CD4-positive, alpha-beta T cell (primary cell): ENCODE measurements at regions of chr1 and their contacts with region 1.

Region 1: DNA sequence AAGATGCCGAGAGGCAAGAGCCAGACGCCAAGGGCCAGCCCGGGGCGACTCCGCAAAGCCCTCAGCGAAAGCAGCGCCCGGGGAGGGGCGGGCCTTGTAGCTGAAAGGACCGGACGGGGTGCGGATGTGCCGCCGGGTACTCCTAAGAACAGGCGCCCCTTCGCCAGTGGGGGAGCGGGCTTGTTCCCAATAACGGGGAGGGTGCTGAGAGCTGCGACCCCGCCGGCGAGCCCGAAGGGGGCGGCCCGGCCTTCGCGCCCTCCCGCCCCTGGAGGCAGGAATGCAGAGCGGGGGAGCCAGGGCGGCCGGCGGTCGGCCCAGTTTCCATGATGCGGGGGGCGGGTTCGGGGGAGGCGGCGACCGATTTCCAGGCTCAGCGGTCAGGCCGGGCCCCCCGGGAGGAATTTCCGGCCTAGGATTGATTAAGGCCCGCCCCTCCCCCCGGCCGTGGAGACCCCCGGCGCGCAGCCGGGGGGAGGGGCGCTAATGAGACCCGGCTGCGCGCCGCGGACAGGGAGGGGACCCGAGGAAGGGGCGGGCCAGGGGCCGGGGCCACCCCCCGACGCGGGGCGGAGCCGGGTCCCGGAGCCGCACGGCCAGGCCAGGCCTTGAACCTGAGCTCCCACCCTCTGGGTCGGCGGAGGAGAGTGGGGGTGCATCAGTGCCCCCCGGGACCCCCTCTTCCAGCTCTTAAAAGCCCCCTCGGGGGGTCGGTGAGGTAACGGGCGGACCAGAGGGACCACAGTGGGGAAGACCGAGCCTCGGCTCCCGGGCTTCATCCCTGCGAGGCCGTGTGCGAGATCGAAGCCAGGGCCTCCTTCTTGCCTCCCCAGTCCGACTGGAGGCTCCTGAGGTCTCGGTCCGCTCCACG is 898 bp upstream of the TMEM200B start:
- DNase-seq: peak; percentile 20 to 69 (median 42)
- ATAC-seq: peak; percentile 55
- H3K4me3 ChIP-seq: peak overlapping the region; percentile 61
- H3K4me3 Mint-ChIP-seq: peak overlapping the region; percentile 48
- H3K27ac ChIP-seq: no peak overlapping the region
- H3K27ac Mint-ChIP-seq: no peak overlapping the region
- H3K4me1 ChIP-seq: peaks cover 41% of the 10 kb centered on the region
- H3K4me1 Mint-ChIP-seq: peaks cover 8% of the 10 kb centered on the region
- H3K27me3 ChIP-seq: peaks cover 25 to 44% of the 10 kb centered on the region in 2 experiments
- H3K27me3 Mint-ChIP-seq: peaks cover 26% of the 10 kb centered on the region
- CTCF ChIP-seq: no peak

Region 2: GRCh38 chr1:27940297-27940696 is 1184.3 kb before region 1 on chr1:
- CTCF ChIA-PET with region 1: no interaction called
- POLR2A ChIA-PET with region 1: no interaction called
- intact Hi-C with region 1: no loop called
- DNase-seq: peak; percentile 63 to 90 (median 74)
- ATAC-seq: peak; percentile 90
- H3K4me3 ChIP-seq: no peak overlapping the region
- H3K4me3 Mint-ChIP-seq: no peak overlapping the region
- H3K27ac ChIP-seq: peak overlapping the region in 1 of 2 donors; percentile 20
- H3K27ac Mint-ChIP-seq: peak overlapping the region; percentile 38
- H3K4me1 ChIP-seq: peaks cover 45% of the 10 kb centered on the region
- H3K4me1 Mint-ChIP-seq: peaks cover 29% of the 10 kb centered on the region
- H3K27me3 ChIP-seq: peaks cover 0 to under 1% of the 10 kb centered on the region in 2 experiments
- H3K27me3 Mint-ChIP-seq: peaks cover 6% of the 10 kb centered on the region
- CTCF ChIP-seq: peak; percentile 79

Region 3: DNA sequence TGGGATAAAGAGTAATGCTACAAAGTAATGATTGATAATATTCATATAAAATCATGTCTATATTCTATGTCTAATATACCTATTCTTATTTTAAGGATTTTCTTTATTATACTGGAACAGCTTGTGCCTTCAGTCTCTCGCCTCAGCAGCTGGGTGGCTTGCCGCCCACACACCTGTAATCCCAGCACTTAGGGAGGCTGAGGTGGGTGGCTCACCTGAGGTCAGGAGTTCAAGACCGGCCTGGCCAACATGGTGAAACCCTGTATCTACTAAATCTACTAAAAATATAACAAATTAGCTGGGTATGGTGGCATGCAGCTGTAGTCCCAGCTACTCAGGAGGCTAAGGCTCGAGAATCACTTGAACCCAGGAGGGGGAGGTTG is 579.4 kb before region 1 on chr1:
- CTCF ChIA-PET with region 1: no interaction called
- POLR2A ChIA-PET with region 1: no interaction called
- intact Hi-C with region 1: no loop called
- DNase-seq: no peak
- ATAC-seq: no peak
- H3K4me3 ChIP-seq: no peak overlapping the region
- H3K4me3 Mint-ChIP-seq: no peak overlapping the region
- H3K27ac ChIP-seq: no peak overlapping the region
- H3K27ac Mint-ChIP-seq: no peak overlapping the region
- H3K4me1 ChIP-seq: no peaks in the 10 kb centered on the region
- H3K4me1 Mint-ChIP-seq: no peaks in the 10 kb centered on the region
- H3K27me3 ChIP-seq: no peaks in the 10 kb centered on the region
- H3K27me3 Mint-ChIP-seq: no peaks in the 10 kb centered on the region
- CTCF ChIP-seq: no peak

Region 4: GRCh38 chr1:29171089-29171488 is 46.5 kb after region 1 on chr1:
- CTCF ChIA-PET with region 1: no interaction called
- POLR2A ChIA-PET with region 1: no interaction called
- intact Hi-C with region 1: loop called in 1 of 2 experiments (anchors 10 kb)
- DNase-seq: no peak
- ATAC-seq: no peak
- H3K4me3 ChIP-seq: no peak overlapping the region
- H3K4me3 Mint-ChIP-seq: peak overlapping the region; percentile 14
- H3K27ac ChIP-seq: no peak overlapping the region
- H3K27ac Mint-ChIP-seq: peak overlapping the region; percentile 48
- H3K4me1 ChIP-seq: peaks cover 47% of the 10 kb centered on the region
- H3K4me1 Mint-ChIP-seq: peaks cover 67% of the 10 kb centered on the region
- H3K27me3 ChIP-seq: no peaks in the 10 kb centered on the region
- H3K27me3 Mint-ChIP-seq: no peaks in the 10 kb centered on the region
- CTCF ChIP-seq: no peak